GM10248 (cell line): ENCODE measurements at regions of chr2 and their contacts with region 1.

Region 1: GRCh38 chr2:168470320-168471162 is 14.5 kb downstream of the CERS6 start:
- DNase-seq: peak; percentile 19
- CTCF ChIP-seq: no peak

Region 2: DNA sequence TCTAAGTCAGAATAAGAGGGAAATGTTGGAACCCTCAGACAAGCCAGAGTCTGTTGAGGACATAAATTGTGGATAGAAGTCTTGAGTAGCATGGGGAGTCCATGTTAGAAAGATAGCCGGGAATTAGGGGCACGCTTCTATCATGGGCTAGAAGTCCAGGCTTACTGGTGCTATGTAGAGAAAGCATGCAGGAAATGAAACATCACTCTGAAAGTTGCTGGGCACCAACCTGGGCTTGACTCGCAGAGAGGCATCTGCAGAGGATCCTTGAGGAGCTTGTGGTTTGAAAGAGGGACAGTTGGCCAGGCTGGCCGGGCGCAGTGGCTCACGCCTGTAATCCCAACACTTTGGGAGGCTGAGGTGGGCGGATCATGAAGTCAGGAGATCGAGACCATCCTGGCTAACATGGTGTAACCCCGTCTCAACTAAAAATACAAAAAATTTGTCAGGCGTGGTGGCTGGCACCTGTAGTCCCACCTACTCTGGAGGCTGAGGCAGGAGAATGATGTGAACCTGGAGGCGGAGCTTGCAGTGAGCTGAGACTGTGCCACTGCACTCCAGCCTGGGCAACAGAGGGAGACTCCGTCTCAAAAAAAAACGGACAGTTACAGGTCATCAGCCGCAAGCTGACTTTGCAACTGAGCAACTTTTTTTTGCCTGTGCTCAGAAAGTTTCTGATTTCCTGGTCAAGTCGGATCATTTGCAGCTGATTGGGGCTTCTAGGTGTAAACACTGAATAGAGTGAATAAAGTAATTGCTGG is 10.5 kb after region 1 on chr2:
- CTCF ChIA-PET with region 1: interaction called, 30 read pairs
- POLR2A ChIA-PET with region 1: interaction called, 5 read pairs
- DNase-seq: no peak
- CTCF ChIP-seq: no peak

Region 3: DNA sequence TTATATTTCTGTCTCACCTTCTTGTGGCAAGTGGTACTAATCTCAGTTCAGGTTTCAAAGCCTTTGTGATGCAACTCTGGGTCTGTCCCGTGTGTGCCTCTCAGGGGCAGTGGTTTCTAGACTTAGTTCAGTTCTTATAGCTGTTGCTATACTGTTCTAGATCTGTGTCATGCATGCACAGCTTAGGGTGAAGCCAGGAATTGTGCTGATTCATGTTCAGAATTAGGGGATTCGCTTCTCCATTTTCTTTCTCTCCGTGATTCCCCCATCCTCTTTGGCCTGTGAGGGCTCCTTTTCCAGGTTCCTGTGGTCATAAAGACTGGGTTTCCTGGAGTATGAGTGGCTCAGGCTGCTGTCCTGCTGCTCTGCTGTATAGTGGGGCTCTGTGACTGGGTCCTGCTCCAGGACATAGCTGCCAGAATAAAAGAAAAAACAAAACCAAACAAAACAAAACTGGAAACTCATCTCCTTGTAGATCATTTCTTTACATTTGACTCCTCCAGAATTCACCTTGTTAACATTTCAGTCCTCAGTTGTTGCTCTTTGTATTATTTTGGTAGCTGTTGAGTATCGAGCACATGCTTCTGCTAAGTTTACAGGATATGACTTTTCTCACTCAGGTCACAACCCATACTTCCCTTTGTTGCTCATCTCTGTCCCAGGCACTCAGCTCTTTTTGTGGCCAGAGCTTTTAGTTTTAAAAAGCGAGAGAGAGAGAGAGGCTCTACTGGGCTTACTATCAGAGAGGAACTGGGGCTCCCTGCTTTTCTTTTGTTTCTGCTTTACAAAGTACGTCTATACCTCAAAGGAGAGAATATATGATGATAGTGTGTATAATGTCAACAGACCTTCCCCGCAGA is 19.7 kb after region 1 on chr2:
- CTCF ChIA-PET with region 1: interaction called, 10 read pairs
- POLR2A ChIA-PET with region 1: no interaction called
- DNase-seq: peak; percentile 65
- CTCF ChIP-seq: no peak

Region 4: DNA sequence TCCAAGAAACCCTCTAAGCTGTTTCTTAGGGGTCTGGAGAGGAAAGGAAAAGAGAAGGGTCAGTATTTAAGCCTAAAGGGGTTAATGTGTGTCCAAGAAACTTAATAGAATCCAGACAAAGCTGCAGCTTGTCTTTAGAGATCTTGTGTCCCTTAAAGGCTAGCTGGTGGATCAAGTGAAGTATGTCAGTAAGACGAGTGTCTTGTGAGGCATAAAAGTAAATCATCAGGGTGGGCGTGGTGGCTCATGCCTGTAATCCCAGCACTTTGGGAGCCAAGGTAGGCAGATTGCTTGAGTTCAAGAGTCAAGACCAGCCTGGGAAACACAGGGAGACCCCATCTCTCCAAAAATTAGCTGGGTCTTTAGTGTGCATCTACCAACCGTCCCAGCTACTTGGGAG is 33.4 kb after region 1 on chr2:
- CTCF ChIA-PET with region 1: no interaction called
- POLR2A ChIA-PET with region 1: no interaction called
- DNase-seq: no peak
- CTCF ChIP-seq: no peak

Region 5: DNA sequence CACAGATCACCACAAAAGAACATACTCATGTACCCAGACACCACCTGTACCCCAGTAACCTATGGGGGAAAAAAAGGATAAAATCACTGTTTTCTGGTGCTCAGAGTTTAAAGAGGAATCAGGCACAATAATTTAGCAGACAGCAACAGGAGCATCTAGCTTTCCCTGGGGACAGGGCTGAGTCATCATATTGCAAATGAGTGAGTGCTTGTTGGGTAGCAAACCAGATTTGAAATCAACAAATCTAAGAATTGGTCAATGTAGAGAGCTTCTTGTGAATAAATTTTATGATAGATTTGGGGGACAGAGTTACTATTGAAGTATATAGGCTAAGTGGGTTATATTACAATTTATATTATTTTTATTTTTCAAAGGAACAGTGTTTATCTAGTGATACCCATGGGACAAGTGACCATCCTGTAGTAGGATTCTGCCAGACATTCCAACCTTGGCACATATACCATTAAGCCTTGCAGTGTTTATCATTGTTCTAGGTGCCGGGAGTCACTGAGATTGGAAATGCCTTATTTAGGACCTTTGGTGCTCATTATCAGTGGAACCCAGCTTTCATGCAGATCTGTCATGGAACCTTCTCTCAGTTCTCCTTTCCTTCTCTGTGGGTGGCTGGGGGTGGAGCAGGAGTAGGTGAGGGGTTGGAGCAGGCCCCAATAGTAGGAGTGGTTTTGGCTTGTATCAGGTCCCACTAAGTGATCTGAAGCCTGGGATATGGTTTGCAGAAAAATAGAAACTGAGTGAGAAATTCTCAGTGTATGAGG is 102.8 kb after region 1 on chr2:
- CTCF ChIA-PET with region 1: no interaction called
- POLR2A ChIA-PET with region 1: no interaction called
- DNase-seq: no peak
- CTCF ChIP-seq: no peak